CD14-positive monocyte (primary cell): ENCODE measurements at regions of chr13 and their contacts with region 1.

Region 1: DNA sequence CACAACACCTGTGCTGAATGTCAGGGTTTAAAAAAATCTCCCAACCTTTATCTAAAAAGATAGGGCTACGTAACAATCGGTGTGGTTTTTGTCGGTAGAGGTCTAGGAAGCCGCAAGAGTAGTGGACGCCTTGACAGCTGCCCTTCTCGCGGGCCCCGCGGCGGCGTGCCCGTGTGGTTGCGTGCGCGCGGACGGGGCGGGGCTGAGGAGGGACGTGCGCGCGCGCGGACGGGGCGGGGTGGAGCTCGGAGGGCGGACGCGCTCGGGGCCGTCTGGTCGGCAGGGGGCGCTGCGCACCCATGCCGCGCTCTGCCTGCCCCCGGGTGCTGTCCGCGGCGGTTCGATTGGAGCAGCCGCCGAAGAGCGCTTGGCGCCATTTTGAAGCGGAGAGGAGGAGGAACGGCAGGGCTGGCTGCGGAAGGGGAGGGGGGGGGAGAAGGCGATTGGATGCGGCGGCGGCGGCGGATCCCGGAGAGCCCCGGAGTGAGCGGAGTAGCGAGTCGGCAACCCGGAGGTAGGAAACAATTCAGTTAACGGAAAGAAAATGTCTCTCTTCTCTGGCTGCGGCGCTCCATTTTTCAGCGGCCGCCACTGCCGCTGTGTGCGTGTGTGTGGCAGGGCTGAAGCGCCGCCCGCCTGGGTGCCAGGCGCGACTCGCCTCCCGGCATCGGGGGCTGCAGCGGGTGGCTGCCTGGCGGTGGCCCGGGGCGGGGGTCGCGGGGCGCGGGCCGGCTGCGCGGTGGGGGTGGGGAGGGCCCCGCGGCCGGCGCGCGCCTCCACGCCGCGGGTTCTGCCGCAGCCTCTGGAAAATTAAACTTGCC is at the start of gene PDS5B:
- DNase-seq: peak; percentile 93 to 96 (median 95)
- H3K4me3 ChIP-seq: peak within 1 kb of the TSS; percentile 87 to 98 (median 88)
- H3K4me3 Mint-ChIP-seq: peak within 1 kb of the TSS; percentile 98
- H3K27ac ChIP-seq: peak within 1 kb of the TSS; percentile 81 to 84
- H3K27ac Mint-ChIP-seq: peak within 1 kb of the TSS; percentile 86 to 94 (median 93)
- H3K4me1 ChIP-seq: peaks cover 17 to 27% of the 10 kb centered on the region in 2 donors
- H3K4me1 Mint-ChIP-seq: peaks cover 39% of the 10 kb centered on the region
- H3K27me3 ChIP-seq: peaks cover 2 to 3% of the 10 kb centered on the region in 2 donors
- H3K27me3 Mint-ChIP-seq: peaks cover 5 to 13% (median 7%) of the 10 kb centered on the region in 3 donors
- CTCF ChIP-seq: peak; percentile 85
- polyA plus RNA-seq, gene PDS5B: 9.0 to 33.0 (median 21.0) TPM

Region 2: GRCh38 chr13:32538621-32539246 is 47.6 kb before region 1 on chr13 and contains the start of gene N4BP2L2:
- intact Hi-C with region 1: loop called (anchors 5 kb)
- DNase-seq: peak; percentile 93 to 97 (median 96)
- H3K4me3 ChIP-seq: peak within 1 kb of the TSS; percentile 80 to 97 (median 95)
- H3K4me3 Mint-ChIP-seq: peak within 1 kb of the TSS; percentile 95 to 96
- H3K27ac ChIP-seq: peak within 1 kb of the TSS; percentile 96 to 99
- H3K27ac Mint-ChIP-seq: peak within 1 kb of the TSS; percentile 98 to 100 (median 99)
- H3K4me1 ChIP-seq: peaks cover 18 to 38% of the 10 kb centered on the region in 2 donors
- H3K4me1 Mint-ChIP-seq: peaks cover 41% of the 10 kb centered on the region
- H3K27me3 ChIP-seq: no peaks in the 10 kb centered on the region
- H3K27me3 Mint-ChIP-seq: peaks cover 0 to 3% (median 0%) of the 10 kb centered on the region in 3 donors
- CTCF ChIP-seq: peak; percentile 9
- polyA plus RNA-seq, gene N4BP2L2: 94.2 to 105 (median 96.4) TPM

Region 3: DNA sequence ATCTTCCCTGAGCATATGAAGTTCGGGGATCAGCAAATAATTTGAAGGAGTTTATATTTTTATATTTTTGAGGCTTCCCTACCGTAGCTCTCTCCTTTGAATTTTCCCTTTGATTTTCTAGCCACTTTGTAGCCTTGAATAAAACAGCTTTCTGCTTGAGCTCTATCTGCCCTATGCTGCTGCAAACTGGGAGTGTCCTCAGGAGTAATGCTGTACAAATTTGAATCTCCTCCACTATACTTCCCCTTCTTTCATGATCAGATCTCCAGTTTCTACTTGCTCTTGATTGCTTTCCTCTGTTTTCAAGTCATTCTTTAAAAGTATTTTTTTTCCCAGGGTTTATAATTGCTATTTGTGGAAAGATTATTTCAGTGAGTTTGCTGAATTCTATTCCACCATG is 14.6 kb after region 1 on chr13:
- intact Hi-C with region 1: no loop called
- DNase-seq: no peak
- H3K4me3 ChIP-seq: no peak overlapping the region
- H3K4me3 Mint-ChIP-seq: no peak overlapping the region
- H3K27ac ChIP-seq: no peak overlapping the region
- H3K27ac Mint-ChIP-seq: peak overlapping the region in 2 of 7 donors; percentile 1 to 10
- H3K4me1 ChIP-seq: no peaks in the 10 kb centered on the region
- H3K4me1 Mint-ChIP-seq: peaks cover 27% of the 10 kb centered on the region
- H3K27me3 ChIP-seq: no peaks in the 10 kb centered on the region
- H3K27me3 Mint-ChIP-seq: no peaks in the 10 kb centered on the region
- CTCF ChIP-seq: no peak

Region 4: DNA sequence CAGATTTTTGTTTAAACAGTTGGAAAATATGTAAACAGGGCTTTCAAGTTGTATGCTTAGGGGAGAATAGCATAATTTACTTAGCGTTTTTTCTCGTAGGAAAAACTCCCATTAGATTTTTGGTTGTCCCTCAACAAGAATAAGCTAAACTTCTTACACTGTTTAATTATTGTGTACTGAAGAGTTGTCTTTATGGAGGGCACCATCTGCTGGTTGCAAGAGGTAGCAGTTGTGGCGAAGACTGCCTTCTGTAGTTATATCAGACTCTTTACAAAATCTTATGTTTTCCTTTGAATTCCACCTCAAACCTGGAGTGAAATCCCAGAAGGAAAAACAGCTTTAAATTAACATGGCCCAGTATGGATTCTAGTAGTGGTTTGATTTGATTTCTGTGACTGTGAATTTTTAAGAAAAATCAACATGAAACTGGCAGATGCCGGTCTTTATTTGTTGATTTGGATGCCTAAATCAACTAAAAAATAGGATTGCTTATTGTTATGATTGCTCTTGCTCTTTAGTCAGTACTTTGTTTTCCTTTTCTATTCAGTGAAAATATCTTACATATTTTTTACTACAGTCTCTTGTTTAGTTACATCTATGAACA is 53.3 kb after region 1 on chr13:
- intact Hi-C with region 1: loop called in 1 of 2 experiments (anchors 5 kb)
- DNase-seq: peak; percentile 38 to 59 (median 56)
- H3K4me3 ChIP-seq: no peak overlapping the region
- H3K4me3 Mint-ChIP-seq: no peak overlapping the region
- H3K27ac ChIP-seq: no peak overlapping the region
- H3K27ac Mint-ChIP-seq: no peak overlapping the region
- H3K4me1 ChIP-seq: peaks cover 15 to 19% of the 10 kb centered on the region in 2 donors
- H3K4me1 Mint-ChIP-seq: peaks cover 28% of the 10 kb centered on the region
- H3K27me3 ChIP-seq: no peaks in the 10 kb centered on the region
- H3K27me3 Mint-ChIP-seq: no peaks in the 10 kb centered on the region
- CTCF ChIP-seq: peak; percentile 82

Region 5: GRCh38 chr13:32650705-32651311 is 64.5 kb after region 1 on chr13:
- intact Hi-C with region 1: loop called in 1 of 2 experiments (anchors 10 kb)
- DNase-seq: peak; percentile 47 to 63 (median 63)
- H3K4me3 ChIP-seq: no peak overlapping the region
- H3K4me3 Mint-ChIP-seq: no peak overlapping the region
- H3K27ac ChIP-seq: peak overlapping the region in 1 of 2 donors; percentile 34
- H3K27ac Mint-ChIP-seq: no peak overlapping the region
- H3K4me1 ChIP-seq: peaks cover 4 to 5% of the 10 kb centered on the region in 2 donors
- H3K4me1 Mint-ChIP-seq: peaks cover 27% of the 10 kb centered on the region
- H3K27me3 ChIP-seq: no peaks in the 10 kb centered on the region
- H3K27me3 Mint-ChIP-seq: no peaks in the 10 kb centered on the region
- CTCF ChIP-seq: peak; percentile 79

Region 6: DNA sequence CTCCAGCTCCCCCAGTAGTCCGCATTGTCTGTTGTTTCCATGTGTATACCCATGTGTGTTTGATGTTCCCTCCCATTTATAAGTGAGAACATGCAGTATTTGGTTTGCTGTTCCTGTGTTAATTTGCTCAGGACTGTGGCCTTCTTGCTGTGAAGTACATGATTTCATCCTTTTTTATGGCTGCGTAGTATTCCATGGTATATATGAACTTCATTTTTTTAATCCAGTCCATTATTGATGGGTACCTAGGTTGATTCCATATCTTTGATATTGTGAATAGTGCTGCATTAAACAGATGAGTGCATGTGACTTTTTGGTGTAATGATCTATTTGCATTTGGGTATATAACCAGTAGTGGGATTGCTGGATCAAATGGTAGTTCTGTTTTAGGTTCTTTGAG is 175.2 kb after region 1 on chr13:
- intact Hi-C with region 1: loop called in 1 of 2 experiments (anchors 10 kb)
- DNase-seq: no peak
- H3K4me3 ChIP-seq: no peak overlapping the region
- H3K4me3 Mint-ChIP-seq: no peak overlapping the region
- H3K27ac ChIP-seq: no peak overlapping the region
- H3K27ac Mint-ChIP-seq: no peak overlapping the region
- H3K4me1 ChIP-seq: no peaks in the 10 kb centered on the region
- H3K4me1 Mint-ChIP-seq: no peaks in the 10 kb centered on the region
- H3K27me3 ChIP-seq: no peaks in the 10 kb centered on the region
- H3K27me3 Mint-ChIP-seq: no peaks in the 10 kb centered on the region
- CTCF ChIP-seq: no peak